Dendritic cell treated with granulocyte-macrophage colony-stimulating factor and Interleukin-4, amounts not matched to agents 40 ng/mL and 50 ng/mL, for 4 days (primary cell): ENCODE measurements at regions of chr12 and their contacts with region 1.

Region 1: GRCh38 chr12:104958009-104958945 is at the start of gene SLC41A2:
- H3K4me3 Mint-ChIP-seq: peak within 1 kb of the TSS; percentile 85
- H3K27ac Mint-ChIP-seq: peak within 1 kb of the TSS; percentile 96
- H3K4me1 Mint-ChIP-seq: peaks cover 33% of the 10 kb centered on the region
- H3K27me3 Mint-ChIP-seq: peaks cover 8% of the 10 kb centered on the region

Region 2: DNA sequence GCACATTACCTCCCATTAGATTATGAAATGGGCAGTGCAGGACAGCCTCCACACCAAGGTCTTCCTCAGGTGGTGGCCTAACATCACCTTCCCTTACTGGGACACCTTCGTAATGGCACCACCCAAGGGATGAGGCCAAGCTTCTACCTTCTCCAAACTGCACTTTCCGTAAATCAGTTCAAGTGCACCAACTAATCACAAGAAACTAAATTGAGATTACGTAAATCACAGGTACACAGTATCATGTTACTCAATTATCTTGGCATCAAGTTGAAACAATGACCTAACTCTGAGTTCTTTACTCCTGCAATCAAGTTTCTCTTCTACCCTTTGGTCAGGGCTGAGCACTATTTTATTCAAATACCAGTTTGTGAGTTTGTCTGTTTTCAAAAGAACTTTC is 14.0 kb before region 1 on chr12:
- intact Hi-C with region 1: no loop called
- H3K4me3 Mint-ChIP-seq: no peak overlapping the region
- H3K27ac Mint-ChIP-seq: no peak overlapping the region
- H3K4me1 Mint-ChIP-seq: no peaks in the 10 kb centered on the region
- H3K27me3 Mint-ChIP-seq: no peaks in the 10 kb centered on the region

Region 3: DNA sequence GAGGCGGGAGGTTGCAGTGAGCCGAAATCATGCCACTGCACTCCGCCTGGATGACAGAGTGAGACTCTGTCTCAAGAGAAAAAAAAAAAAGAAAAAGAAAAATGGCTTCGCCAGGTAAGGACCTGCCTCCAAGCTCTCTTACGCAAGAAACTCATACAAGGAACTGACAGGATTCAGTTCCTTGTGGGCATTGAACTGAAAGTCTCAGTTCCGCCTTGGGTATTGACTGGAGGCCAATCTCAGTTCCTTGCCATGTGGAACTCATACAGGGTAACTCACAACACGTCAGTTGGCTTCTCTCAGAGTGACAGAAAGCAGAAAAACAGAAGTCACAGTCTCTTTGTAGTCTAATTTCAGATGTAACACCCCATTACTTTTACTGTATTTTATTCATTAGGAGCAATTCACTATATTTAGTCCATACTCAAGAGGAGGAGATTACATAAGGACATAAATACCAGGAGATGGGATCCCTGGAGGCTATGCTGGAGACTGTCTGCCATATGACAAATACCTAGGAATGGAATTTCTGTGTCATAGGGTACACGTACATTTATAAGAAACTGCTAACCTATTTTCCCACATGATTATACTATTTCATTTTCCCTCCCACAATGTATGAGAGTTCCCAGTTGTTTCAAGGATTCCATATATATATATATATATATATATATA is 16.5 kb after region 1 on chr12:
- intact Hi-C with region 1: loop called (anchors 2 kb)
- H3K4me3 Mint-ChIP-seq: peak overlapping the region; percentile 23
- H3K27ac Mint-ChIP-seq: peak overlapping the region; percentile 67
- H3K4me1 Mint-ChIP-seq: peaks cover 48% of the 10 kb centered on the region
- H3K27me3 Mint-ChIP-seq: no peaks in the 10 kb centered on the region

Region 4: GRCh38 chr12:104986022-104986941 is 28.0 kb after region 1 on chr12 and contains the start of gene NOPCHAP1:
- intact Hi-C with region 1: loop called (anchors 1 kb)
- H3K4me3 Mint-ChIP-seq: peak within 1 kb of the TSS; percentile 89
- H3K27ac Mint-ChIP-seq: peak within 1 kb of the TSS; percentile 86
- H3K4me1 Mint-ChIP-seq: peaks cover 49% of the 10 kb centered on the region
- H3K27me3 Mint-ChIP-seq: no peaks in the 10 kb centered on the region